ENCODE measurements at regions of chr13 and their contacts with region 1.

Region 1: DNA sequence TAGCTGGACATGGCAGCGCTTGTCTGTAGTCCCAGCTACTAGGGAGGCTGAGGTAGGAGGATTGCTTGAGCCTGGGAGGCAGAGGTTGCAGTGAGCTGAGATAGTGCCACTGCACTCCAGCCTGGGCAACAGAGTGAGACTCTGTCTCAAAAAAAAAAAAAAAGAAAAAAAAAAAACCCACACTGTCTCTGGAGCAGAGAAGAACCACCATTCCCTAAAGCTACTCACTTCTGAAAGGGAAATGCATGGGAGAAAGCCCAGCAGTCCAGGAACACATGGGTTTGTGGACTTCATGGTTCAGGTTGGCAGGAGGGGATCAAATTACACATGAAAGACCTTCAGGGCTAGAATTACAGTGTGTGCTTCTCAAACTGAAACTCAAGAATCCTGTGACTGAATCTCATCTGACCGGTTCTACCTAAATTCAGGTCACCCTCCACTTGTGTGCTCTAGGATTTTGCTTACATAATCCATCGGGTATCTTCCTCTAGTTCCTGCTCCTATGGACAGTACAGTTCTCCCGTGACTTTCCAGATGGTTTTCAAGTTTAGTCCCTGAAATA is 30.2 kb upstream of the CPB2 start:
- DNase-seq: no peak
- ATAC-seq: no peak
- H3K4me3 ChIP-seq: no peak overlapping the region
- H3K4me3 Mint-ChIP-seq: no peak overlapping the region
- H3K27ac ChIP-seq: peak overlapping the region; percentile 15
- H3K27ac Mint-ChIP-seq: peak overlapping the region; percentile 69 to 86
- H3K4me1 ChIP-seq: peaks cover 0 to 5% of the 10 kb centered on the region in 2 experiments
- H3K4me1 Mint-ChIP-seq: peaks cover 19 to 33% (median 24%) of the 10 kb centered on the region in 3 donors
- H3K27me3 ChIP-seq: no peaks in the 10 kb centered on the region
- H3K27me3 Mint-ChIP-seq: no peaks in the 10 kb centered on the region

Region 2: GRCh38 chr13:44921931-44922758 is 1212.9 kb before region 1 on chr13:
- CTCF ChIA-PET with region 1: no interaction called
- POLR2A ChIA-PET with region 1: interaction called in 1 of 2 experiments, 11 read pairs
- DNase-seq: no peak
- ATAC-seq: no peak
- H3K4me3 ChIP-seq: no peak overlapping the region
- H3K4me3 Mint-ChIP-seq: no peak overlapping the region
- H3K27ac ChIP-seq: no peak overlapping the region
- H3K27ac Mint-ChIP-seq: no peak overlapping the region
- H3K4me1 ChIP-seq: peaks cover 5 to 16% of the 10 kb centered on the region in 2 experiments
- H3K4me1 Mint-ChIP-seq: no peaks in the 10 kb centered on the region
- H3K27me3 ChIP-seq: peaks cover 0 to 9% of the 10 kb centered on the region in 2 experiments
- H3K27me3 Mint-ChIP-seq: peaks cover 12 to 13% of the 10 kb centered on the region in 2 donors

Region 3: DNA sequence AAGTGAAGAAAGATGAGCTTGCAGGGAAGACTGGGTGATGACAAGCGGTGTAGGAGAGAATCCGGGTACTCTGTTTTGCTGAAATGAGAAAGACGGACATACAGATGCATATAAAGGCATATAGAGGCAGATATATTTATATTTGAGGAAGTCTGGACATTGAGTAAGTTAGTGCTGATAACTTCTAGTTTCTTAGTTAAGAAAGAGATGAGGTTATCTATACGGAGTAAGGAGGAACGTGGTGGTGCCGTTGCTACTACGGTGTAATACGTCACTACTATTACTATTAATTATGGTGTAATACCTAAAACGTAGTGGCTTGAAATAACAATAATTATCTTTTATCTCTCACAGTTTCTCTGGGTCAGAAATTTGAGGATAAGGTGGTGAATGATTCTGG is 20.4 kb before region 1 on chr13:
- CTCF ChIA-PET with region 1: no interaction called
- POLR2A ChIA-PET with region 1: no interaction called
- DNase-seq: no peak
- ATAC-seq: no peak
- H3K4me3 ChIP-seq: no peak overlapping the region
- H3K4me3 Mint-ChIP-seq: no peak overlapping the region
- H3K27ac ChIP-seq: no peak overlapping the region
- H3K27ac Mint-ChIP-seq: no peak overlapping the region
- H3K4me1 ChIP-seq: no peaks in the 10 kb centered on the region
- H3K4me1 Mint-ChIP-seq: peaks cover 1 to 3% (median 2%) of the 10 kb centered on the region in 3 donors
- H3K27me3 ChIP-seq: peaks cover 0 to 12% of the 10 kb centered on the region in 2 experiments
- H3K27me3 Mint-ChIP-seq: peaks cover 14 to 23% of the 10 kb centered on the region in 2 donors

Region 4: DNA sequence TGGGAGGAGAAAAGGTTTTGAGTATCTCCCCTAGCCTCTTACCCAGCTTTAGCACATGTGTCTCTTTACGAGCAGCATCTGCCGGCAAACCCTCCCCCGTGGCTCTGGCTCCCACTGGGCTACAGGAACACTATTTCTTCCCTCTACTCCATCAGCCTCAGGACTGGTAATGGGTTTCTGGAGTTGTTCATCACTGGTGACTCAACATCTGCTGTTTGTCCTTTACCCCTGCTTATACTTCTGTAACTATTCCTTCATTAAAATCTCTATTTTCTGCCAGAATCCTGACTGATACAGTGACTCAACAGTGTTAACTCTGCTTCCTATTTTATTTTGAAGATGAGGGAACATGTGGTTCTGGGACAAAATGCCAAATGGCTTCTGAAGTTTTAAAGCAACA is 1199.1 kb after region 1 on chr13:
- CTCF ChIA-PET with region 1: no interaction called
- POLR2A ChIA-PET with region 1: no interaction called
- DNase-seq: no peak
- ATAC-seq: no peak
- H3K4me3 ChIP-seq: no peak overlapping the region
- H3K4me3 Mint-ChIP-seq: no peak overlapping the region
- H3K27ac ChIP-seq: no peak overlapping the region
- H3K27ac Mint-ChIP-seq: no peak overlapping the region
- H3K4me1 ChIP-seq: no peaks in the 10 kb centered on the region
- H3K4me1 Mint-ChIP-seq: no peaks in the 10 kb centered on the region
- H3K27me3 ChIP-seq: no peaks in the 10 kb centered on the region
- H3K27me3 Mint-ChIP-seq: peaks cover 0 to 8% of the 10 kb centered on the region in 2 donors

Measured in T-cell (primary cell).